Psoas muscle (tissue), 8 donors: ENCODE measurements at regions of chrX and their contacts with region 1.

Region 1: GRCh38 chrX:65706041-65706828 is 38.8 kb downstream of the MSN start:
- DNase-seq: peak; percentile 54 to 66
- ATAC-seq: peak; percentile 73 to 89 (median 78)
- H3K4me3 ChIP-seq: no peak overlapping the region
- H3K27ac ChIP-seq: peak overlapping the region; percentile 59
- H3K4me1 ChIP-seq: peaks cover 6% of the 10 kb centered on the region
- H3K27me3 ChIP-seq: no peaks in the 10 kb centered on the region
- CTCF ChIP-seq: no peak

Region 2: GRCh38 chrX:65595460-65595876 is 110.8 kb before region 1 on chrX:
- intact Hi-C with region 1: loop called in 1 of 2 experiments (anchors 10 kb)
- DNase-seq: peak; percentile 91 to 93
- ATAC-seq: peak; percentile 90 to 98 (median 94)
- H3K4me3 ChIP-seq: no peak overlapping the region
- H3K27ac ChIP-seq: peak overlapping the region; percentile 58
- H3K4me1 ChIP-seq: peaks cover 8% of the 10 kb centered on the region
- H3K27me3 ChIP-seq: peaks cover 0 to 3% (median 0%) of the 10 kb centered on the region in 3 donors
- CTCF ChIP-seq: peak; percentile 96

Region 3: DNA sequence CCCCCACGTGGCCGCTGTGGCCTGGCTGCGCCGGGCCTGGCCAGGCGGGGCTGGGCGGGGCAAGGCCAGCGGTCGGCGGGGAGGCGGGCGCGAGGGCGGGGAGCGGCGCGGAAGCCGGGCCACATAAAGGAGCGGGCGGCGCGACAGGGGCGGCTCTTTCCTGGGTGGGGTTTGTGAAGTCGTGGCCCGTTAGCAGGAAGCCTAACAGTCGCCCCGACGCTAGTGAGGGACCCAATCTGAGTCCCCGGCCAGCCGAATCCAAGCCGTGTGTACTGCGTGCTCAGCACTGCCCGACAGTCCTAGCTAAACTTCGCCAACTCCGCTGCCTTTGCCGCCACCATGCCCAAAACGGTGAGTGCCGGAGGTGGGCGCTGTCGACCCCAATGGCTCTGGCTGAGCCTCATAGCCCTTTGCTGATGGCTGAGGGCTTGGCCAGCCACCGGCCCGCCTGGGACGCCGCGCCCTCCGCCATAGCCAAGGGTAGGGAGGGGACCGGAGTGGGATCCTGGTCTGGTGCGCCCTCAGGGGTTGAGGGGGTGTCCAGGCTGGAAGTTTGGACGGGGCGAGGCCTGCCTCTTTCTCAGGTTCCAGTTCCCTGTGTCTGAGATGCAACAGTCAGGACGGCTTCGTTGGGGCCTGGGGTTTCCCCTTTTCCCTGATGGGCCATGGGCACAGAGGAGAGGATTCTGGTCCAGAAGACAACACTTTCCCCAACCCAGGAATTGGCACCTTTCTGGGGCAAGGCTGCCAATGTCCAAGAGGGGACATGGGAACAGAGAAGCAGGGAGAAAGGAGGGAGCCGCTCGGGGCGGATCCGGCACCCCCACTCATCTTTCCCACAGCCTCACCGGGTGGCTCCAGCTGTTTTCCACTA is 38.5 kb before region 1 on chrX and contains the start of gene MSN:
- intact Hi-C with region 1: loop called in 1 of 2 experiments (anchors 5 kb)
- DNase-seq: peak; percentile 83 to 87
- ATAC-seq: peak; percentile 87 to 91 (median 90)
- H3K4me3 ChIP-seq: peak within 1 kb of the TSS; percentile 84
- H3K27ac ChIP-seq: peak within 1 kb of the TSS; percentile 91
- H3K4me1 ChIP-seq: peaks cover 18% of the 10 kb centered on the region
- H3K27me3 ChIP-seq: no peaks in the 10 kb centered on the region
- CTCF ChIP-seq: no peak
- total RNA-seq, gene MSN: 66.0 to 101 (median 84.1) TPM